ENCODE measurements at regions of chr11 and their contacts with region 1.

Region 1: GRCh38 chr11:61834278-61835048 is 6.4 kb downstream of the FADS2 start:
- DNase-seq: no peak
- H3K4me3 ChIP-seq: no peak overlapping the region
- H3K27me3 ChIP-seq: no peaks in the 10 kb centered on the region
- CTCF ChIP-seq: no peak

Region 2: DNA sequence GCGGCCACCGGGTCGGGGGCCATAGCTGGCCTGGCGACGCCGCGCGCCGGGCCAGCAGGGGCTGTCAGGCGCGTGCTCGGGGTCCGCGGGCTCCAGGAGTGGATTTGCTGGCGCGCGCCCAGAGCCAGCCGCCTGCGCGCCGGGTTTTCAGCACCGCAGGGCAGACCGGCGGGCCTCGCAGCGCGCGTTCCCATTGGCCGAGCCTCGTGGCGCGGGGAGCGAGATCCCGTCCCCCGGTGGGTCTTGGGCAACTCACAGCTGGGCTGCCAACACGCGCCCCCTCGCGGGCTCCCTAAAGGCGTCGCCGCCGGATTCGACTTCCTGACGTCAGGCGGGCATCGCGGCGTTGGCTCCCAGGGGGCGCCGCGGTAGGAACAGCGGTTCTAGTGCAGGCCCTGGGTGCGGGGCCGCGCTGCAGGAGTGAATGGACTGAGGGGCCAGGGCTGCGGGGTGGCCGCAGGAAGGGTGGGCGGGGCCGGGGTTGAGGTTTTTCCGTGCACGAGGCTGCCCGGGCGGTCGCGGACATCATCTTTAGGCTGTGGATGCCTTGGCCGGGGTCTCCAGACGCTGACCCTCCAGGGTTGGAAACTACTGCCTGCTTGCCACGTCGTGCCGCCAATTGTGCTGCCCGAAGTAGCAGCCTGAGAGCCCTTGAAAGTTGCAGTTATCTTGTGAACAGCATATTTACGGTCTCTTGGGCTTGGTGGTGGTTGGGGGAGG is 17.6 kb before region 1 on chr11 and contains the start of gene FADS1:
- CTCF ChIA-PET with region 1: interaction called, 22 read pairs
- POLR2A ChIA-PET with region 1: interaction called, 20 read pairs
- DNase-seq: peak; percentile 45
- H3K4me3 ChIP-seq: peak within 1 kb of the TSS; percentile 65
- H3K27me3 ChIP-seq: no peaks in the 10 kb centered on the region
- CTCF ChIP-seq: peak; percentile 77
- polyA plus RNA-seq, gene FADS1: 48.1 and 58.0 TPM in 2 replicates

Region 3: GRCh38 chr11:61881397-61881796 is 46.9 kb after region 1 on chr11:
- CTCF ChIA-PET with region 1: interaction called, 4 read pairs
- POLR2A ChIA-PET with region 1: interaction called, 15 read pairs
- DNase-seq: no peak
- H3K4me3 ChIP-seq: no peak overlapping the region
- H3K27me3 ChIP-seq: no peaks in the 10 kb centered on the region
- CTCF ChIP-seq: no peak